CD4-positive, alpha-beta T cell (primary cell): ENCODE measurements at regions of chr5 and their contacts with region 1.

Region 1: GRCh38 chr5:131548176-131548575 is 86.9 kb downstream of the RAPGEF6 start:
- DNase-seq: peak in 4 of 14 experiments; percentile 32 to 82 (median 76)
- ATAC-seq: peak; percentile 95
- H3K4me3 ChIP-seq: peak overlapping the region; percentile 75
- H3K4me3 Mint-ChIP-seq: peak overlapping the region; percentile 98
- H3K27ac ChIP-seq: peak overlapping the region; percentile 70 to 75
- H3K27ac Mint-ChIP-seq: peak overlapping the region; percentile 94
- H3K4me1 ChIP-seq: peaks cover 24% of the 10 kb centered on the region
- H3K4me1 Mint-ChIP-seq: peaks cover 72% of the 10 kb centered on the region
- H3K27me3 ChIP-seq: no peaks in the 10 kb centered on the region
- H3K27me3 Mint-ChIP-seq: no peaks in the 10 kb centered on the region
- CTCF ChIP-seq: no peak

Region 2: DNA sequence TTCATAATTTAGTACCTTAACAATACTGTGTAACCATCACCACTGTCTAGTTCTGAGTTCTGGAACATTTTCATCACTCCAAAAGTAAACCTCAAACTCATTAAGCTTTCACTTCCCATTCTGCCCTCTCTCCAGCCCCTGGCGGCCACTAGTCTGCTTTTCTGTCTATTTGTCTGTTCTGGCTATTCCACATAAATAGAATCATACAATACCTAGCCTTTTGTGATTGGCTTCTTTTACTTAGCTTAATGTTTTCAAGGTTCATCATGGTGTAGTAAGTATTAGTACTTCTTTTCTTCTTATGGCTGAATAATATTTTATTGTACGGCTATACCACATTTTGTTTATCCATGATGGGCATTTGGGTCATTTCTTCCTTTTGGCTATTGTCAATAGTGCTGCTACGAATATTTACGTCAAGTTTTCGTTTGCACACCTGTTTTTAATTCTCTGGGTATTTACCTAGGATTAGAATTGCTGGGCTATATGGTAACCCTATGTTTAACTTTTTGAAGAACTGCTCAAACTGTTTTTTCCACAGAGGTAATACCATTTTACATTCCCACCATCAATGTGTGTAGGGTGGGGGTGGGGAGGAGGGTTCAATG is 51.7 kb before region 1 on chr5:
- CTCF ChIA-PET with region 1: no interaction called
- POLR2A ChIA-PET with region 1: interaction called, 3 read pairs
- intact Hi-C with region 1: loop called in 1 of 2 experiments (anchors 10 kb)
- DNase-seq: peak in 1 of 14 experiments; percentile 9
- ATAC-seq: no peak
- H3K4me3 ChIP-seq: no peak overlapping the region
- H3K4me3 Mint-ChIP-seq: no peak overlapping the region
- H3K27ac ChIP-seq: no peak overlapping the region
- H3K27ac Mint-ChIP-seq: peak overlapping the region; percentile 64
- H3K4me1 ChIP-seq: no peaks in the 10 kb centered on the region
- H3K4me1 Mint-ChIP-seq: peaks cover 56% of the 10 kb centered on the region
- H3K27me3 ChIP-seq: no peaks in the 10 kb centered on the region
- H3K27me3 Mint-ChIP-seq: no peaks in the 10 kb centered on the region
- CTCF ChIP-seq: no peak

Region 3: GRCh38 chr5:131514316-131515283 is 33.6 kb before region 1 on chr5:
- CTCF ChIA-PET with region 1: interaction called, 5 read pairs
- POLR2A ChIA-PET with region 1: interaction called, 8 read pairs
- intact Hi-C with region 1: loop called (anchors 1 to 5 kb)
- DNase-seq: peak in 4 of 14 experiments; percentile 38 to 83 (median 79)
- ATAC-seq: peak; percentile 84
- H3K4me3 ChIP-seq: peak overlapping the region; percentile 30
- H3K4me3 Mint-ChIP-seq: peak overlapping the region; percentile 82
- H3K27ac ChIP-seq: peak overlapping the region; percentile 36 to 39
- H3K27ac Mint-ChIP-seq: peak overlapping the region; percentile 84
- H3K4me1 ChIP-seq: peaks cover 29% of the 10 kb centered on the region
- H3K4me1 Mint-ChIP-seq: peaks cover 84% of the 10 kb centered on the region
- H3K27me3 ChIP-seq: no peaks in the 10 kb centered on the region
- H3K27me3 Mint-ChIP-seq: no peaks in the 10 kb centered on the region
- CTCF ChIP-seq: peak; percentile 54

Region 4: DNA sequence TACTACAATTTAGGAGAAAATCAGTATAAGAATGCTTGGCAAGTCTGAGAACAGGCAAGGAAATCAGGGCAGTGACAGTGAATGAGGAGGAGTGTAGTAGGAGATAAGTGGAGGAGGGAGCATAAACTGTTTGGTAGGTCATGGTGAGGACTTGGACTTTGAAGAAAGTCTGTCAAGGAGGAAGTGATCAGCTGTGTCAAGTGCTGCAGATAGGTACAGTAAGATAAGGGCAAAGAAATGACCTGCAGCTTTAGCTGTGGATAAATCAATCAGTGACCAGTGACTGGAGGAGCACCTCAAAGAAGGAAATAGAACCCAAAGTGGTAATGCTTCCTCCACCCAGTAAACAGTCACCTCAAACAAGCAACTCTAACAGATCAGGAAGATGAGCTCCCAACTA is 19.5 kb before region 1 on chr5:
- CTCF ChIA-PET with region 1: interaction called, 7 read pairs
- POLR2A ChIA-PET with region 1: interaction called, 61 read pairs
- intact Hi-C with region 1: loop called in 1 of 2 experiments (anchors 2 kb)
- DNase-seq: no peak
- ATAC-seq: no peak
- H3K4me3 ChIP-seq: no peak overlapping the region
- H3K4me3 Mint-ChIP-seq: peak overlapping the region; percentile 37
- H3K27ac ChIP-seq: peak overlapping the region in 1 of 2 donors; percentile 16
- H3K27ac Mint-ChIP-seq: peak overlapping the region; percentile 59
- H3K4me1 ChIP-seq: peaks cover 31% of the 10 kb centered on the region
- H3K4me1 Mint-ChIP-seq: peaks cover 79% of the 10 kb centered on the region
- H3K27me3 ChIP-seq: no peaks in the 10 kb centered on the region
- H3K27me3 Mint-ChIP-seq: no peaks in the 10 kb centered on the region
- CTCF ChIP-seq: no peak

Region 5: GRCh38 chr5:131533836-131534235 is 14.3 kb before region 1 on chr5:
- CTCF ChIA-PET with region 1: interaction called, 6 read pairs
- POLR2A ChIA-PET with region 1: interaction called, 61 read pairs
- intact Hi-C with region 1: loop called (anchors 1 to 2 kb)
- DNase-seq: peak in 2 of 14 experiments; percentile 47 to 49
- ATAC-seq: peak; percentile 32
- H3K4me3 ChIP-seq: no peak overlapping the region
- H3K4me3 Mint-ChIP-seq: peak overlapping the region; percentile 57
- H3K27ac ChIP-seq: peak overlapping the region in 1 of 2 donors; percentile 53
- H3K27ac Mint-ChIP-seq: peak overlapping the region; percentile 84
- H3K4me1 ChIP-seq: peaks cover 23% of the 10 kb centered on the region
- H3K4me1 Mint-ChIP-seq: peaks cover 80% of the 10 kb centered on the region
- H3K27me3 ChIP-seq: no peaks in the 10 kb centered on the region
- H3K27me3 Mint-ChIP-seq: no peaks in the 10 kb centered on the region
- CTCF ChIP-seq: peak; percentile 14